ENCODE measurements at regions of chr5 and their contacts with region 1.

Region 1: GRCh38 chr5:1315709-1316587 is 21.1 kb upstream of the TERT start:
- DNase-seq: peak; percentile 76 to 88 (median 78)
- H3K4me3 ChIP-seq: peak overlapping the region; percentile 53 to 62
- H3K4me3 Mint-ChIP-seq: peak overlapping the region; percentile 77 to 92 (median 84)
- H3K27ac ChIP-seq: peak overlapping the region; percentile 53
- H3K27ac Mint-ChIP-seq: peak overlapping the region; percentile 86 to 97 (median 94)
- H3K4me1 ChIP-seq: peaks cover 60% of the 10 kb centered on the region
- H3K4me1 Mint-ChIP-seq: peaks cover 46 to 67% (median 57%) of the 10 kb centered on the region in 4 donors
- H3K27me3 ChIP-seq: no peaks in the 10 kb centered on the region
- H3K27me3 Mint-ChIP-seq: no peaks in the 10 kb centered on the region

Region 2: GRCh38 chr5:1185652-1186350 is 130.1 kb before region 1 on chr5:
- CTCF ChIA-PET with region 1: no interaction called
- POLR2A ChIA-PET with region 1: no interaction called
- intact Hi-C with region 1: no loop called
- DNase-seq: no peak
- H3K4me3 ChIP-seq: no peak overlapping the region
- H3K4me3 Mint-ChIP-seq: no peak overlapping the region
- H3K27ac ChIP-seq: no peak overlapping the region
- H3K27ac Mint-ChIP-seq: no peak overlapping the region
- H3K4me1 ChIP-seq: no peaks in the 10 kb centered on the region
- H3K4me1 Mint-ChIP-seq: no peaks in the 10 kb centered on the region
- H3K27me3 ChIP-seq: no peaks in the 10 kb centered on the region
- H3K27me3 Mint-ChIP-seq: peaks cover 9 to 22% of the 10 kb centered on the region in 2 donors

Region 3: DNA sequence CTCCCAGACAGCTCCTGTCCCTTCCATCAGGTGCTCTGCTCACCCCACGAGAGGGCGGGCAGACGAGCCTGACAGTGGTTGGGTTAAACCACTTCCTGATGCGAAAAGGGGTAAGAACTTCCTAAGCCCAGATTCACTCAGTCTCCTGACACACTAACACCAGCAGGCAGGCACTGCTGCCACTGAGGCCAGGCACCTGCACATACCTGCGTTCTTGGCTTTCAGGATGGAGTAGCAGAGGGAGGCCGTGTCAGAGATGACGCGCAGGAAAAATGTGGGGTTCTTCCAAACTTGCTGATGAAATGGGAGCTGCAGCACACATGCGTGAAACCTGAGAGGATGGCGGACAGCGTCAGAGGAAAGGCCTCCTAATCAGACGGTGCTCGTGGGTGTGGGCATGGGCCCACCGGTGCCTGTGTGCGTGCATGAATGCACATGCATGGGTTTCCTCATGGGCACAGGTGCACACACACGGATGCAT is 60.8 kb before region 1 on chr5:
- CTCF ChIA-PET with region 1: interaction called, 4 read pairs
- POLR2A ChIA-PET with region 1: interaction called, 31 read pairs
- intact Hi-C with region 1: loop called (anchors 1 kb)
- DNase-seq: peak; percentile 59 to 66 (median 64)
- H3K4me3 ChIP-seq: peak overlapping the region; percentile 12 to 34
- H3K4me3 Mint-ChIP-seq: peak overlapping the region; percentile 69 to 84 (median 82)
- H3K27ac ChIP-seq: no peak overlapping the region
- H3K27ac Mint-ChIP-seq: peak overlapping the region; percentile 36 to 81 (median 58)
- H3K4me1 ChIP-seq: peaks cover 18% of the 10 kb centered on the region
- H3K4me1 Mint-ChIP-seq: peaks cover 15 to 22% (median 17%) of the 10 kb centered on the region in 4 donors
- H3K27me3 ChIP-seq: no peaks in the 10 kb centered on the region
- H3K27me3 Mint-ChIP-seq: no peaks in the 10 kb centered on the region

Region 4: DNA sequence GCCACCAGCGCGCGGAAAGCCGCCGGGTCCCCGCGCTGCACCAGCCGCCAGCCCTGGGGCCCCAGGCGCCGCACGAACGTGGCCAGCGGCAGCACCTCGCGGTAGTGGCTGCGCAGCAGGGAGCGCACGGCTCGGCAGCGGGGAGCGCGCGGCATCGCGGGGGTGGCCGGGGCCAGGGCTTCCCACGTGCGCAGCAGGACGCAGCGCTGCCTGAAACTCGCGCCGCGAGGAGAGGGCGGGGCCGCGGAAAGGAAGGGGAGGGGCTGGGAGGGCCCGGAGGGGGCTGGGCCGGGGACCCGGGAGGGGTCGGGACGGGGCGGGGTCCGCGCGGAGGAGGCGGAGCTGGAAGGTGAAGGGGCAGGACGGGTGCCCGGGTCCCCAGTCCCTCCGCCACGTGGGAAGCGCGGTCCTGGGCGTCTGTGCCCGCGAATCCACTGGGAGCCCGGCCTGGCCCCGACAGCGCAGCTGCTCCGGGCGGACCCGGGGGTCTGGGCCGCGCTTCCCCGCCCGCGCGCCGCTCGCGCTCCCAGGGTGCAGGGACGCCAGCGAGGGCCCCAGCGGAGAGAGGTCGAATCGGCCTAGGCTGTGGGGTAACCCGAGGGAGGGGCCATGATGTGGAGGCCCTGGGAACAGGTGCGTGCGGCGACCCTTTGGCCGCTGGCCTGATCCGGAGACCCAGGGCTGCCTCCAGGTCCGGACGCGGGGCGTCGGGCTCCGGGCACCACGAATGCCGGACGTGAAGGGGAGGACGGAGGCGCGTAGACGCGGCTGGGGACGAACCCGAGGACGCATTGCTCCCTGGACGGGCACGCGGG is 20.9 kb before region 1 on chr5 and contains the start of gene TERT:
- CTCF ChIA-PET with region 1: interaction called, 4 read pairs
- POLR2A ChIA-PET with region 1: interaction called, 29 read pairs
- intact Hi-C with region 1: loop called (anchors 1 kb)
- DNase-seq: peak; percentile 58 to 67 (median 62)
- H3K4me3 ChIP-seq: peak within 1 kb of the TSS in 1 of 2 donors; percentile 45
- H3K4me3 Mint-ChIP-seq: peak within 1 kb of the TSS in 5 of 8 donors; percentile 33 to 66 (median 49)
- H3K27ac ChIP-seq: no peak within 1 kb of the TSS
- H3K27ac Mint-ChIP-seq: no peak within 1 kb of the TSS
- H3K4me1 ChIP-seq: peaks cover 11% of the 10 kb centered on the region
- H3K4me1 Mint-ChIP-seq: peaks cover 0 to 6% (median 0%) of the 10 kb centered on the region in 4 donors
- H3K27me3 ChIP-seq: no peaks in the 10 kb centered on the region
- H3K27me3 Mint-ChIP-seq: no peaks in the 10 kb centered on the region
- total RNA-seq, gene TERT: not detected